H1 (cell line): ENCODE measurements at regions of chr2 and their contacts with region 1.

Region 1: GRCh38 chr2:169513926-169514325 is 4.4 kb downstream of the KLHL41 start:
- DNase-seq: no peak
- H3K4me3 ChIP-seq: no peak overlapping the region
- H3K27ac ChIP-seq: no peak overlapping the region
- H3K4me1 ChIP-seq: peaks cover 0 to 2% (median 0%) of the 10 kb centered on the region in 4 experiments; a peak in 2 of 7 replicates
- H3K27me3 ChIP-seq: no peaks in the 10 kb centered on the region
- CTCF ChIP-seq: no peak
- EP300 ChIP-seq: no peak
- POLR2A ChIP-seq: no peak
- RAD21 ChIP-seq: no peak

Region 2: DNA sequence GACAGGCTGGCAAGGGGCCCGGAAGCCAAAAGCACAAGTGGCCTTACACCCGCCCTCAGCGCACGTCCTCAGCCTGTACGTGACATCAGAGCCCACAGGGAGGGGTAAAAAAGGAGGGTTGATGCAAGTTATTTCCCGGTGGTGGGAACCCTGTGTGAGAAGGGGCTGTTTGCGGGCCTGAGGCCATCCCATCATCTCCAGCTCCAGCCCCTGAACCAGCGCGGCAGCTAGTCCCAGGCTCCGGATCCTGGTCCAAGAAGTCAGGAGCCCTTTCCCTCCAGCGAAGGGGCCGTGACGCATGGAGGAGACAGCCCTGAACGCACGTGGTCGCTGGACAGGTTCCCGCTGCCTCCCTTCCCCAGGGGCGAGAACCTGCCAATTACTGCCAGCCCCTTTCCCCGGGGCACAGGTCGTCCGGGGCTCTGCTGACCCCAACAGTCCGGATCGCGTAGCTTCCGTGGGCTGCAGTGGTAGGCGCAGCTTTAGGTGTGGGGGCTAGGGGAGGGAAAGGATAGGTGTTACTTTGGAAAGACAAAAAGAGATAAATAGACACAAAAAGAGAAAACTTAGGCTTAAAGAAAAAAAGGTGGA is 150.3 kb before region 1 on chr2:
- CTCF ChIA-PET with region 1: no interaction called
- POLR2A ChIA-PET with region 1: no interaction called
- DNase-seq: peak in 1 of 2 experiments; percentile 70
- H3K4me3 ChIP-seq: peak overlapping the region; percentile 42 to 65 (median 53)
- H3K27ac ChIP-seq: no peak overlapping the region
- H3K4me1 ChIP-seq: peaks cover 0 to 22% (median 13%) of the 10 kb centered on the region in 4 experiments; a peak in 6 of 7 replicates
- H3K27me3 ChIP-seq: peaks cover 18 to 42% (median 37%) of the 10 kb centered on the region in 4 experiments
- CTCF ChIP-seq: no peak
- EP300 ChIP-seq: no peak
- POLR2A ChIP-seq: no peak
- RAD21 ChIP-seq: peak in 1 of 2 experiments; percentile 40; a peak in 2 of 4 replicates

Region 3: GRCh38 chr2:169406891-169407290 is 107.0 kb before region 1 on chr2:
- CTCF ChIA-PET with region 1: no interaction called
- POLR2A ChIA-PET with region 1: no interaction called
- DNase-seq: no peak
- H3K4me3 ChIP-seq: no peak overlapping the region
- H3K27ac ChIP-seq: no peak overlapping the region
- H3K4me1 ChIP-seq: peaks cover 2 to 9% (median 3%) of the 10 kb centered on the region in 4 experiments; a peak in 2 of 7 replicates
- H3K27me3 ChIP-seq: no peaks in the 10 kb centered on the region
- CTCF ChIP-seq: no peak
- EP300 ChIP-seq: no peak
- POLR2A ChIP-seq: no peak
- RAD21 ChIP-seq: no peak

Region 4: GRCh38 chr2:169528271-169528701 is 14.4 kb after region 1 on chr2:
- CTCF ChIA-PET with region 1: interaction called, 14 read pairs
- POLR2A ChIA-PET with region 1: interaction called, 4 read pairs
- DNase-seq: peak; percentile 9 to 89
- H3K4me3 ChIP-seq: no peak overlapping the region
- H3K27ac ChIP-seq: no peak overlapping the region
- H3K4me1 ChIP-seq: no peaks in the 10 kb centered on the region
- H3K27me3 ChIP-seq: no peaks in the 10 kb centered on the region
- CTCF ChIP-seq: peak; percentile 76 to 94 (median 80)
- EP300 ChIP-seq: no peak
- POLR2A ChIP-seq: no peak
- RAD21 ChIP-seq: peak; percentile 65 to 74